ENCODE measurements at regions of chr10 and their contacts with region 1.

Region 1: GRCh38 chr10:52488606-52489485 is 174.8 kb downstream of the DKK1 start:
- DNase-seq: no peak
- ATAC-seq: 0 out of 2 replicates have a peak, but pooled peaks have one; percentile 20
- H3K4me3 ChIP-seq: no peak overlapping the region
- H3K27ac ChIP-seq: peak overlapping the region; percentile 87
- H3K4me1 ChIP-seq: peaks cover 4% of the 10 kb centered on the region
- H3K27me3 ChIP-seq: no peaks in the 10 kb centered on the region
- CTCF ChIP-seq: peak; percentile 58; the same call in 1 of the 2 replicates

Region 2: DNA sequence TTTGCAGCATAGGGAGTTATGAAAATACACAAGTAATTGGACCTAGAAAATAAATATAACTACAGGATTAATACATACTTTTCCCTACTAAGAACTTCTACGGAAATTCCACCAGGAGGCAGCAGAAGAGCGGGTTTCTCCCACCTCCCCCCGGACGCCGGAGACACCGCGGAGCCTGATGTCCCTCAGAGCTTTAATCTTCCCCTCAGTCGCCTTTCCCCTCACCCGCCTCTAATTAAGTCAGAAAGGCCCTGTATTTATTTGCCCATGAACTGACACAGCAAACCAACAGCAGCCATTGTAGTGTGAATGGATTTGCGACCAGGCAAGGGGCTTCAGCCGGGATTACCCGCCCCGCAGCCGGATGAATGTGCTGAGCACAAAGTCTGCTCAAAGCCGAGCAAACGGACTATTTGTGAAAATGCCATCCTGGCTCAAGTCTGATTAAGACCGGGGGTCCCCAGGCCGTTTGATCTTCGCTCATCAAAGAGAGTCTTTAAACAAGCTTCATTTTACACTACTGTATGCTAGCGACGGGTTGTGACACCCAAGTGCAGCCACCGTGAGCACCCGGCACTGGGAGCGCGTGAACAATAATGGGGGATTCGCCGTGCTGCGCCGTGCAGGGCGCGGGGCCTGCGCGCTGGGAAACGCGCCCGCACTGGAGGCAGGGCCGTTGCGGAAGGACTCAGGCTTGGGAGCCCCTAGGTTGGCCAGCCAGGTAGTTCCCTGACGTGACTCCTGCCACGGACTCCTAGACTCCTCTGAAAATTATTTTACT is 180.4 kb before region 1 on chr10:
- CTCF ChIA-PET with region 1: interaction called, 3 read pairs
- POLR2A ChIA-PET with region 1: no interaction called
- in situ Hi-C with region 1: no loop called
- intact Hi-C with region 1: loop called (anchors 2 kb)
- DNase-seq: peak; percentile 64
- ATAC-seq: peak; percentile 86
- H3K4me3 ChIP-seq: peak overlapping the region; percentile 36 to 54
- H3K27ac ChIP-seq: peak overlapping the region; percentile 98
- H3K4me1 ChIP-seq: peaks cover 42% of the 10 kb centered on the region
- H3K27me3 ChIP-seq: no peaks in the 10 kb centered on the region
- CTCF ChIP-seq: peak; percentile 90

Region 3: GRCh38 chr10:52313933-52314816 is 174.7 kb before region 1 on chr10 and contains the start of gene DKK1:
- CTCF ChIA-PET with region 1: no interaction called
- POLR2A ChIA-PET with region 1: interaction called, 3 read pairs
- in situ Hi-C with region 1: no loop called
- intact Hi-C with region 1: loop called (anchors 2 kb)
- DNase-seq: no peak
- ATAC-seq: peak; percentile 75
- H3K4me3 ChIP-seq: peak within 1 kb of the TSS; percentile 91 to 97
- H3K27ac ChIP-seq: peak within 1 kb of the TSS; percentile 100
- H3K4me1 ChIP-seq: peaks cover 53% of the 10 kb centered on the region
- H3K27me3 ChIP-seq: no peaks in the 10 kb centered on the region
- CTCF ChIP-seq: peak; percentile 99
- total RNA-seq, gene DKK1: 563 TPM

Region 4: DNA sequence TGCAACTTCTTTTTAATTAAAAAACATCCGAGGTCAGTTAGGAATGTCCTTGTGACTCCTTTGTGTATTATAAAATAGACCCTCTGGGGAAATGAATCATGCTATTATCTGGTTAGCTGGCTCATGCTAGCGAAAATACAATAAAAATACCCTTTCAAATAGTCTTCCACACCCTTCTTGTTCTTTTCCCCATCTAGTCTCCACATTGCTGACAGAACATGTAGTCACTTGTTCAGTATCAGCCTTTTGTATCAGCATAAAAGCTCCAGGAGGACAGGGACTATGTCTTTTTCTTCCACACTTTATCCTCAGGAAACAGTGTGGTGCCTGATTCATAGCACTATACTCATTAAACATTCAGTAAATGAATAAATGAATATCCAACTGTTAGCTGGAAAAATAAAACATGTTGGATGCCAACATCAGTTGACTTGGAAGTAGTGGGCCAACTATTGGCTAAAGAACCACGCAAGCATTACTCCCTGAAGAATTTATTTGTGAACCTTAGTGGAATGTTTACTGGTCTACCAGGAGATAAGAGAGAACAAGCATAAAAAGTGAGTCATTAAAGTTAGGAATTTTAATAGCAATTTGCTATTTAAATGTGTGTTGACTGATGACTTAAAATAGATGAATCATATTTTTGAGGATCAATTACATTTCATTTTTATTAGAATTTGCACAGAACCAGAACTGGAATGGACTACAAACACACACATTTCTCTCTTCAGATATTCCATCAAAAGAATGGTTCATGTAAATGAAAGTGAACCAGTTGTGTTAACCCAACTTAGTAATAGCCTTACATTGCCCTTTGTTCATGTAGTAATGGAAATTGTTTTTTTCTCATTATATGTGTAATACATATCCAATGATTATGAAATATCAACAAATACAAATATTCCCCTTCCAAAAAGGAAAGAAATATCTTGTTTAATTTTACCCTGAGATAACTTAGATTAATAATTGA is 45.1 kb before region 1 on chr10:
- CTCF ChIA-PET with region 1: no interaction called
- POLR2A ChIA-PET with region 1: no interaction called
- in situ Hi-C with region 1: no loop called
- intact Hi-C with region 1: loop called (anchors 5 kb)
- DNase-seq: peak; percentile 86
- ATAC-seq: peak; percentile 93
- H3K4me3 ChIP-seq: no peak overlapping the region
- H3K27ac ChIP-seq: peak overlapping the region; percentile 98
- H3K4me1 ChIP-seq: peaks cover 23% of the 10 kb centered on the region
- H3K27me3 ChIP-seq: no peaks in the 10 kb centered on the region
- CTCF ChIP-seq: no peak

Region 5: GRCh38 chr10:52566471-52567246 is 77.8 kb after region 1 on chr10:
- CTCF ChIA-PET with region 1: no interaction called
- POLR2A ChIA-PET with region 1: no interaction called
- in situ Hi-C with region 1: no loop called
- intact Hi-C with region 1: loop called (anchors 10 kb)
- DNase-seq: peak; percentile 58
- ATAC-seq: peak; percentile 81
- H3K4me3 ChIP-seq: peak overlapping the region in 1 of 2 experiments; percentile 2; a peak in 2 of 4 replicates
- H3K27ac ChIP-seq: peak overlapping the region; percentile 67
- H3K4me1 ChIP-seq: peaks cover 11% of the 10 kb centered on the region; the same call in 1 of the 2 replicates
- H3K27me3 ChIP-seq: no peaks in the 10 kb centered on the region
- CTCF ChIP-seq: peak; percentile 76; the same call in 1 of the 2 replicates

Measured in Panc1 (cell line).